Activated T-helper 2 cell treated with anti-CD3 and anti-CD28 coated beads, Interferon-gamma antibody, Interleukin-2, Interleukin-4, amounts not matched to agents 10 μg/mL and 5 μg/mL and 100 μg/mL, durations not matched to agents 14 hours and 24 hours and 36 hours (primary cell): ENCODE measurements at regions of chr1 and their contacts with region 1.

Region 1: DNA sequence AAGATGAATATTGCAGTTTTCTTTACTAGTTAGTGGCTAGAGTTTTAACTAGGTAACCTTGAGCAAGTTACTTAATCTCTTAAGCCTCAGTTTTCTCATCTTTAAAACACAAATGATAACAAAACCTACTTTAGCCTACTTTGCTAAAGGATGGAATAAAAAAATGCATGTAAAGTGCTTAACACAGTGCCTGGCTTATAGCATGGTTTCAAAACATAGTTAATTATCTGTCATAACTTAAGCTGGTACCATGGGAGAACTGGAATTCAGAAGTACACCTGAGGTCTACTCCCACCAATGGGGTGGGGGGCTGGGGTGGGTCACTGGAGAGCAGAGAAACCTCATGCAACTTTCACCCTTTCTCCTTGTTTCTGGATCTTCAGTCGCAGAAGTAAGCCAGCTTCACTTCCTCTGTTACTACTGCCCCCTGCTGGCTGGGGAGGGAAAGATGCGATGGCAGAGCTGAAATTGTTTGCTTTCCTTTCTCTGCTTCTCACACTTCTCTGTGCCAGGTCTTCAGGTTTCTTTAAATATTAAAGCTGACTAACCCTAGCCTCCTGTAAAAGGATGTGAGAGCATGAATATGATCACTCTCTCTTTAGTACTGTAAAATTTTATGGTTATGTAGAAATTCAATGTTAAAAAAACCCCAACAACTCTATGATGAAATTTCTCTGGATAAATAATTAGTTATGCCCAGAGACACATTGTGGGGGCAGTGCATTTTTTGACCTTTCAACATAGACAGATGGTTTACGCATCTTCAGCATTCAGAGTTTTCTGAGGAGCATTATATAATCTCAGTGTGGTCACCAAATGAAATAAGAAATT is 324.2 kb downstream of the HLX start:
- DNase-seq: peak; percentile 46
- H3K4me3 Mint-ChIP-seq: no peak overlapping the region
- H3K27ac Mint-ChIP-seq: no peak overlapping the region
- H3K4me1 Mint-ChIP-seq: peaks cover 16% of the 10 kb centered on the region
- H3K27me3 Mint-ChIP-seq: no peaks in the 10 kb centered on the region

Region 2: GRCh38 chr1:220810179-220810653 is 393.2 kb before region 1 on chr1:
- intact Hi-C with region 1: loop called (anchors 1 kb)
- DNase-seq: peak; percentile 53
- H3K4me3 Mint-ChIP-seq: peak overlapping the region; percentile 30
- H3K27ac Mint-ChIP-seq: no peak overlapping the region
- H3K4me1 Mint-ChIP-seq: peaks cover 5% of the 10 kb centered on the region
- H3K27me3 Mint-ChIP-seq: no peaks in the 10 kb centered on the region

Region 3: DNA sequence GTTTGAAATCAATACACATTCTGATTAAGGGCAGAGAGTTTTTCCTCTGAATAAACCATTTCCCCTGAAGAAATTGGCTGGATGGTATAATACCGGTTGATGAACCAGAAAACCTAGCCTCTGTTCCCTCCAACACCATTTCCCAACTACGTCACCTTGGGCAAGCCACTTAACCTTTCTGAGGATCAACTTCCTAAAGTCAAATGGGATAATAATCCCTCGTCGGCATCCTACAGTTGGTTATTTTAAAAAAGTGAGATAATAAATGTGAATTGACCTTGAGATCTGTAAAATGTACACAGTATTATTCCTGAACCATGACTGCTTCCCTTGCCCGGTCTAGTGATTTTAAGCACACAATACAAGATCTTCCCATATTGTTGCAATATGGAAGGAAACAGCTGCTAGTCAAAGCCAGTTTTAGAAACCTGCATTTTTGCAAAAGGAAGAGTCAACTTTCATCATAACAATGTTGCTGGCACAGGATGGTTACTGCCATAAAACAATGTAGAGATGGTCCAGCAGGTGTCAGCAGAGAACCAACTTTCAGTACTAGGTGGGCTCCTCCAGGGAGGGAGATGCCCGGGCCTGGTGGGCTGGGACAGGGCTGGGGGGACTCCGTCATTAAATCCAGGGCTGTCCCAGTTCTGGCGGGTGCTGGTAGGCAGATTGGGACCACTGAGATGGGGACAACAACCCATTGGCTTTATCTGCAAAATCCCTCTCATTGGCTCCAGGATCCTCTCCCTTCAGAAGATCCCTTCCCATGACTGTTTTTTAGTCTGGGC is 329.4 kb before region 1 on chr1:
- intact Hi-C with region 1: loop called (anchors 1 kb)
- DNase-seq: no peak
- H3K4me3 Mint-ChIP-seq: no peak overlapping the region
- H3K27ac Mint-ChIP-seq: no peak overlapping the region
- H3K4me1 Mint-ChIP-seq: peaks cover 19% of the 10 kb centered on the region
- H3K27me3 Mint-ChIP-seq: peaks cover 52% of the 10 kb centered on the region

Region 4: DNA sequence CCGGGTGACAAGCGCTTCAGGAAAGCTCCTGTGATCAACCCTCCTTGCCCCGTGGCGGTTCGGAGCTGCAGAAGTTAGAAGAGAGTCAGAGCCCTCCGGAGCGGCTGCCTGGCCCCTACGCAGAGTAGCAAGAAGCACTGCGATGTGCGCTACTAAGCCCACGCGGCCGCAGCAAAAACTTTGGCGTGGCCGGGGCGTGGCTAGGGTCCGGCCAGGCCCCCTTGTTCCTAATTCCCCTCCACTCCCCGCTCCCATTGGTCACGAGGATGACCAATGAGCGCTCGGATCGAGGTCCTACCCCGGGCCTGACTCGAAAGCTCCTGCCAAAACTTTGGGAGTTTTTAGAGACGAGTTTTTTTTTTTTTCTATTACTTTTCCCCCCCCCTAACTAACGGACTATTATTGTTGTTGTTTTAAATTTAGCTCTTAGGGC is 324.3 kb before region 1 on chr1 and contains the start of gene HLX:
- intact Hi-C with region 1: loop called (anchors 1 kb)
- DNase-seq: peak; percentile 15
- H3K4me3 Mint-ChIP-seq: peak within 1 kb of the TSS; percentile 85
- H3K27ac Mint-ChIP-seq: peak within 1 kb of the TSS; percentile 78
- H3K4me1 Mint-ChIP-seq: peaks cover 31% of the 10 kb centered on the region
- H3K27me3 Mint-ChIP-seq: peaks cover 70% of the 10 kb centered on the region
- total RNA-seq, gene HLX: 8.2 and 10.4 TPM in 2 replicates

Region 5: GRCh38 chr1:220894025-220894923 is 309.2 kb before region 1 on chr1:
- intact Hi-C with region 1: loop called (anchors 5 kb)
- DNase-seq: no peak
- H3K4me3 Mint-ChIP-seq: peak overlapping the region; percentile 49
- H3K27ac Mint-ChIP-seq: no peak overlapping the region
- H3K4me1 Mint-ChIP-seq: peaks cover 12% of the 10 kb centered on the region
- H3K27me3 Mint-ChIP-seq: peaks cover 68% of the 10 kb centered on the region

Region 6: GRCh38 chr1:221035680-221036153 is 167.7 kb before region 1 on chr1:
- intact Hi-C with region 1: no loop called
- DNase-seq: no peak
- H3K4me3 Mint-ChIP-seq: no peak overlapping the region
- H3K27ac Mint-ChIP-seq: peak overlapping the region; percentile 55
- H3K4me1 Mint-ChIP-seq: peaks cover 10% of the 10 kb centered on the region
- H3K27me3 Mint-ChIP-seq: peaks cover 2% of the 10 kb centered on the region

Region 7: DNA sequence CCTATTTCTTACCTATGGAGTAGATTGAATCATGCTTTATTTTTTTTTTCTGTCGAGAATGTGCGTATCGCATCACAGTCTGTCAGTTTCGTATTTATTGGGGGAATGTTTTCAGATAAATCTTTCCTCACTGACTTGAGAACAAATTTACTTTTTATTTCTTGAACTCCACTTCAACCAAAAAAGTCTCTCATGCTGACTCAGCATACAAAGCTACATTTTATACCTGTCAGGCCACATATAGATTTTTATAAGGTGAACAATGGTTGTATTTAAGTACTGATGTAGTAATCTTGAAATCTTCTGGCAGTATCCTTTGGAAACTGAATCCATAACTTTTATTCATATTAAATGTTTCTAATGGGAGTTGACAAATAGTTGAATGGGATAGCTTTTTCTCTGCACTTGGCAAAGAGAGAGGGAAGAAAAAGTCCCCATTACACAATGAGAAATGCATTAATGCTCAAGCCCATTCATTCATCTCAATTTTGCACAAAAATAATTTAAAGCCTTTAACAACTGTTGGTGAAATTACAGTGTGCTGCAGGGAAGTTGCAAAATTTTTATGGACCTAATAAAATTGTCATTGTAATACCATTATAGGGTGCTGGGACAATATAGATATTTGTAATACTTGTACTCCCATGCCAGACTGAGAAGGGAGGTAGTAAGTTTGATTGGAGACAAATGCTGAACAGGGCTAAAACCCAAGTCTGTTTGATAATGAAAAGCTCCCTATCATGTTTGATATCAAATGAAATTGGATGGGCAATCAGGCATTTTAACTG is 43.4 kb after region 1 on chr1:
- intact Hi-C with region 1: no loop called
- DNase-seq: no peak
- H3K4me3 Mint-ChIP-seq: no peak overlapping the region
- H3K27ac Mint-ChIP-seq: no peak overlapping the region
- H3K4me1 Mint-ChIP-seq: no peaks in the 10 kb centered on the region
- H3K27me3 Mint-ChIP-seq: no peaks in the 10 kb centered on the region